ENCODE measurements at regions of chr10 and their contacts with region 1.

Region 1: DNA sequence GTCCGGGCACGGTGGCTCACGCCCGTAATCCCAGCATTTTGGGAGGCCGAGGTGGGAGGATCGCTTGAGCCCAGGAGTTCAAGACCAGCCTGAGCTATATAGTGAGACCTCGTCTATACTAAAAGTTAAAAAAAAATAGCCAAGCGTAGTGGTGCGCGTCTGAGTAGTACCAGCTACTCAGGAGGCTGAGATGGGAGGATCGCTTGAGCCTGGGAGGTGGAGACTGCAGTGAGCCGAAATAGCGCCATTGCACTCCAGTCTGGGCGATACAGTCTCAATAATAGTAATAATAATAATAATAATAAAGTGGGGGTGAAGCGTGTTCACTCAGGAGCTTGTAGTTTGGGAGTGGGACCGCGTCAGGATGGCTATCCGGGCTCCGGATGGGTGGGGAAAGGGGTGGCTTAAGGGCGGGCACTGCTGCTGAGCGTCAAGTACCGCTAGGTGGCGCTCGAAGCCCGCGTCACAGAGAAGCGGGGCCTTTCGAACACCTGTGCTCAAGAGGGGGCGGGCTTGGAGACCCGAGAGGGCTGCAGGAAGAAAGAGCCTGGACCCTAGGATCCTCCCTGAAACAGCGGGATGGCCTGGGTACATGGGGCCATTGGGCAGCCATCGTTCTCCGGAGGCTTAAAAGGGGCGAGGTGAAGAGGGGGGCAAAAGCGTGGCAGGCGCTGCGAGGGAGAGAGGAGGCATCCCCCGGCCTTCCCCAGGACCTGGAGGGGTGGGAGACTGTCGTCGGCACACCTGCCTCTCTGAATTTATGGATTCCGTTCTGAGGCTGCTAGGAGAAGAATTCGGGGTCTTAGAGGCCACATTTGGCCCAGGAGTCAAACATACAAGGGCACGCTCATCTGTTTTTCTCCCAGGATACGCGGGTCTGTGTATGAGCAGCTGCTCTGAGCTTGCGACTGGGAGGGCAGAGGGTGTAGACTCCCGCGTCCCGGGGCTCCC is 14.5 kb downstream of the LBX1 start:
- DNase-seq: peak; percentile 74
- H3K4me3 Mint-ChIP-seq: no peak overlapping the region
- H3K27ac Mint-ChIP-seq: peak overlapping the region; percentile 46
- H3K4me1 Mint-ChIP-seq: peaks cover 31% of the 10 kb centered on the region
- H3K27me3 Mint-ChIP-seq: peaks cover 73% of the 10 kb centered on the region

Region 2: DNA sequence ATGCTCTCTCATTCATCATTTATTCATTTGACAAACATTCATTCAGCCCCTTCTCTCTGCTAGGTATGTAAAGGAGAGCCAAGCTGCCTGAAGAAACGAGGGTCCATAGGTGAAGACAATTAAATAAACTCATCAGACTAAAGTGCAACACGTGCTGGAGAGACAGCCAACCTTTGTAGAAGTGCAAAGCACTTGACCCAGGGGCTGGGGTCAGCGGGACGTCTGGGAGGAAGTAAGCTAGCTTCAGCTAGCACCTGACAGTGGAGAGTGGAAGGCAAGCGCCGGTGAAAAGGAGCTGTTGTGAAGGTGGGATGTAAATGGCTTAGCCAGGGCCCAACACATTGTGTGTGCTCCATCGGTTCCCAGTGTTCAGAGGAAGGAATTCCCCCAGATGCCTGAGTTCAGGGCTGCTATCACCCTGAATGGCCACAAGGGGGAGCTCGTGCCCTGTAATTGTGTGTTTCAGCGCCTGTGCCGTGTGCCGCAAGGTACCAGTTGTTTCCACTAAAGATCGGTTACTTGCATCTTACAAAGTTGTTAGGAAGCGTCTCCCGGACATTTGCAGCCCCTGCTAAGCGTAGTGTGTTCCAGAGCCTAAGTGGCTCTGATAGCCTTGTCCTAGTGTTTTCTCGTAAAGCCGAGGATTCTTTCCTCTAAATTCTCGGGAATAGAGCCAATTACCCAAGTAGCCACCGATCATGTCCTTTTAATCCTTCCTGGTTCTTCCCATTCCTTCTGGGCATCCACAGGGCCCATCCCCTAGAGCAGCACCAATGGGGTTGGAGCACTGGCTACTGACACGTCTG is 53.0 kb before region 1 on chr10:
- CTCF ChIA-PET with region 1: interaction called, 18 read pairs
- POLR2A ChIA-PET with region 1: no interaction called
- DNase-seq: peak; percentile 70
- H3K4me3 Mint-ChIP-seq: no peak overlapping the region
- H3K27ac Mint-ChIP-seq: no peak overlapping the region
- H3K4me1 Mint-ChIP-seq: peaks cover 15% of the 10 kb centered on the region
- H3K27me3 Mint-ChIP-seq: peaks cover 67% of the 10 kb centered on the region

Region 3: DNA sequence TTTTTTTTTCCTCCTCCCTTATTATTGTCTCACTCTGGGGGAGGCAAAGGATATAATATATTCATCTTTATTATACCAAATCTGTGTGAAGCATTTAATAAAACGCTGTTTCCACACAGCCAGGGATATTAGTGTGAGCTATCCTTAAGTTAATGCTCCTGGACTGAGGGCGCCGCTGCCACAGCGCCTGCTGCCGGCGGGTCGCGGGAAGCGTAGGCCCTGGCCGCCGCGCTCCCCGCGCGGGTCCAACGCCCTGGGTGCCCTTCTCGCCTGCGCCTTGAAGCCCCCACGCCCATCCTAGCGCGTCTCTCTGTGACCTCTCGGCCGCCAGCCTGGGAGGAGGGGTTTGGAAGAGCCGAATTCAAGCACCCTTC is 24.0 kb after region 1 on chr10:
- CTCF ChIA-PET with region 1: interaction called, 42 read pairs
- POLR2A ChIA-PET with region 1: no interaction called
- DNase-seq: no peak
- H3K4me3 Mint-ChIP-seq: no peak overlapping the region
- H3K27ac Mint-ChIP-seq: no peak overlapping the region
- H3K4me1 Mint-ChIP-seq: peaks cover 7% of the 10 kb centered on the region
- H3K27me3 Mint-ChIP-seq: peaks cover 67% of the 10 kb centered on the region

Region 4: DNA sequence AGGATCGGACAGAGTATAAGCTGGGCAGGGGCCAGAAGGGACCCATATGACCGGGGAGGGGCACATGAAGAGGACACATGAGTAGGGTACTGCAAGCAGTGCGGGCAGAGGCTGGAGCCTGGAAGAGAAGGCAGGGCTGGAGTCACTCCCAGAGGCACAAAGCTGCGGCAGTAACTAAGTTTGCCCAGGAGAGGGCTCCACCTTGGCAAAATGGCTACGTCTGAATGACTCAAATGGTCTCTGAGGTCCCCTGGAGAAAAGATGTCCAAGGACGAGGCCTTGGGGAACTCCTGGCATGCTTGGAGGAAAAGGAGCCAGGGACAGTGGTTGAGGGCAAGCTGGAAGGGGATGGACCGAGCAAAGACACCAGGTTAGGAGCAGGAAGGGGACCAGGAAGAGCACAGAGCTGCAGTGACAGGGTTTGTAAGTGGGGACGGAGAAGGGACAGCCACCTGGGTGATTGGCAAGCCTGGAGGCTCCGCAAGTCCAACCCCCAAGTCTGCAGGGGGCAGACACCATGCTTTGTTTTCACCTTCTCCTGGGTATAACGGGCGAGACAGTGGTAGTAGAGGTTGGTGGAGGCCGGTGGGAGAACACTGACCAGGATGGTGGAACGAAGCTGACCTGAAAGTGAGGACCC is 57.6 kb after region 1 on chr10:
- CTCF ChIA-PET with region 1: no interaction called
- POLR2A ChIA-PET with region 1: no interaction called
- DNase-seq: peak; percentile 66
- H3K4me3 Mint-ChIP-seq: no peak overlapping the region
- H3K27ac Mint-ChIP-seq: no peak overlapping the region
- H3K4me1 Mint-ChIP-seq: no peaks in the 10 kb centered on the region
- H3K27me3 Mint-ChIP-seq: peaks cover 24% of the 10 kb centered on the region

Region 5: DNA sequence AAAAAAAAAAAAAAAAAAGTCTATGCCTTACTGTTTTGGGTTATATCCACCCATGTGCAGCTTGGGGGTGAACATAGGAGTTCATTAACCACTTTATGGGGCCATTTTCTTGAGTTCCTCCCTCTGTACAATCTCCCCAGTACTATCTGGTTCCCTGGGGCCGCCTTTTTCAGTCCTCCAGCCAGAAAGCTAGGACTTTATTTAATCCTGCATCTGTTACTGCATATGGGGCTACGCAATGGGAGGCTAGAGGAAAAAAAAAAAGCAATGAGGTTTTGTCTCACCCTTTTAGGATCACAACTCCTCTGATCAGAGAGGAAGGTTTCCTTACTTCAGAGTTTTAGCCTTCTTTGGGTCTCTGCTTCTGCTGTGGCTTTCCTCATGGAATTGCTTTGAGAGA is 190.3 kb after region 1 on chr10:
- CTCF ChIA-PET with region 1: no interaction called
- POLR2A ChIA-PET with region 1: no interaction called
- DNase-seq: no peak
- H3K4me3 Mint-ChIP-seq: no peak overlapping the region
- H3K27ac Mint-ChIP-seq: no peak overlapping the region
- H3K4me1 Mint-ChIP-seq: no peaks in the 10 kb centered on the region
- H3K27me3 Mint-ChIP-seq: no peaks in the 10 kb centered on the region

Region 6: GRCh38 chr10:101441541-101442455 is 227.1 kb after region 1 on chr10:
- CTCF ChIA-PET with region 1: interaction called, 22 read pairs
- POLR2A ChIA-PET with region 1: no interaction called
- DNase-seq: no peak
- H3K4me3 Mint-ChIP-seq: no peak overlapping the region
- H3K27ac Mint-ChIP-seq: no peak overlapping the region
- H3K4me1 Mint-ChIP-seq: peaks cover 7% of the 10 kb centered on the region
- H3K27me3 Mint-ChIP-seq: no peaks in the 10 kb centered on the region

Region 7: GRCh38 chr10:101569838-101570766 is 355.4 kb after region 1 on chr10:
- CTCF ChIA-PET with region 1: interaction called, 30 read pairs
- POLR2A ChIA-PET with region 1: no interaction called
- DNase-seq: peak; percentile 84
- H3K4me3 Mint-ChIP-seq: peak overlapping the region; percentile 73
- H3K27ac Mint-ChIP-seq: no peak overlapping the region
- H3K4me1 Mint-ChIP-seq: peaks cover 18% of the 10 kb centered on the region
- H3K27me3 Mint-ChIP-seq: peaks cover 39% of the 10 kb centered on the region

Region 8: DNA sequence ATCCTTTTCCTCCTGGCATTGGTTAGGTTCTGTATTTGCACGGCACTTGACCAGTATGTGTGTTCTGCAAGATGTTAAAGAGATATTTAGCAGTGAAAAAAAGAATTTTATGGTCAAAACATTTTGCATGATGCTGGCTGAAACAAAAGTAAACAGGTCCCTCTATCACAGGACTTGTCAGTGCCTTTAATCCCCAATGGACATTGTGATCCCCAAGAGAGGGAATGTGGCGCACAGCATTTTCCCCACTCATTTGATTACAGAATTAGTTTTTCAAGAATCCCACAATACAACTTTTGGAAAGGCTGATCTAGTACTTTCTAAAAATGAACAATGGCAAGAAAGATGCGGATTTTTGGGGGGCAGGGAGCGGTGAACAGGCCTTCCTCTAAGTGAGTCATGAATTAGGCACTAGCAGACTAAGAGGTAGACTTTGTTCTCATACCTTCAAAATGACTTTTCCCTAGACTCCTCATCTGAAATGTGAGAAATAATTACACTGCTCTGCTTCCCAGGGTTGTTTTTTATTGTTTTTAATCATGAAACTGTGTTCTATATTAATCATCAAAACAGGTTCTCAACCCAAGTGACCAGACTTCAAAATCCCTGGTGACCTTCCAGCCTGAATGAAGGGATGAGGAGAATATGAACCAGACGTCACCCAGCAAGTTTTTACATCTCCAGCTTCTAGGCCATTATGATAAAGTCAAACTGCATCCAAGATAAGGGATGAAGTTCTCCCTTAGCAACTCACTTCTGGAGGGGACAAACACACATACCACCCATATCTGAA is 471.6 kb after region 1 on chr10:
- CTCF ChIA-PET with region 1: no interaction called
- POLR2A ChIA-PET with region 1: no interaction called
- DNase-seq: no peak
- H3K4me3 Mint-ChIP-seq: no peak overlapping the region
- H3K27ac Mint-ChIP-seq: no peak overlapping the region
- H3K4me1 Mint-ChIP-seq: peaks cover 13% of the 10 kb centered on the region
- H3K27me3 Mint-ChIP-seq: no peaks in the 10 kb centered on the region